Activated B cell treated with CpG ODN at 0.5 μM for 24 hours (primary cell): ENCODE measurements at regions of chr4 and their contacts with region 1.

Region 1: GRCh38 chr4:83639849-83640493 is 104.1 kb downstream of the GPAT3 start:
- DNase-seq: no peak
- ATAC-seq: peak; percentile 62
- H3K4me3 Mint-ChIP-seq: no peak overlapping the region
- H3K27ac Mint-ChIP-seq: no peak overlapping the region
- H3K4me1 Mint-ChIP-seq: peaks cover 2% of the 10 kb centered on the region
- H3K27me3 Mint-ChIP-seq: peaks cover 9% of the 10 kb centered on the region
- CTCF ChIP-seq: no peak

Region 2: DNA sequence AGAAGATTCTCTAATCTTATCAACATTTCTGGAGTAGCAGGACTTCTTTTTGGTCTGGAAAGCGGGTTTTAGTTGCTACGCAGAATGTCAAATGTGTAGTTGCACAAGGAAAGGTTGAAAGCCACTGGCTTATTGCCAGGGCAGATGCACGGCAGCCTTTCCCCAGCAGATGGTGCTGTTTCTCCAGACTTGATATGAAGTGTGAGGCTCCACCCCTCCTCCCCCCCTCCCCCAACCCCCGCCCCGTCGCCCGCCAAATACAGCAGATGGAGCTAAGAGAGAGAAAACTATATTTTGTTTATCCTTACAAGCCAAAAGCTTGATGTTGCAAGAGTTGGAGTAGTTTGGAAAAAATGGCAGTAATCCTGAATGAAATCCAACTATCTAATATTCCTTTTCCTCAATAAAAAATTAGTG is 1177.5 kb before region 1 on chr4:
- CTCF ChIA-PET with region 1: no interaction called
- POLR2A ChIA-PET with region 1: no interaction called
- intact Hi-C with region 1: loop called (anchors 2 kb)
- DNase-seq: peak; percentile 66
- ATAC-seq: peak; percentile 99
- H3K4me3 Mint-ChIP-seq: no peak overlapping the region
- H3K27ac Mint-ChIP-seq: no peak overlapping the region
- H3K4me1 Mint-ChIP-seq: peaks cover 22% of the 10 kb centered on the region
- H3K27me3 Mint-ChIP-seq: no peaks in the 10 kb centered on the region
- CTCF ChIP-seq: no peak

Region 3: DNA sequence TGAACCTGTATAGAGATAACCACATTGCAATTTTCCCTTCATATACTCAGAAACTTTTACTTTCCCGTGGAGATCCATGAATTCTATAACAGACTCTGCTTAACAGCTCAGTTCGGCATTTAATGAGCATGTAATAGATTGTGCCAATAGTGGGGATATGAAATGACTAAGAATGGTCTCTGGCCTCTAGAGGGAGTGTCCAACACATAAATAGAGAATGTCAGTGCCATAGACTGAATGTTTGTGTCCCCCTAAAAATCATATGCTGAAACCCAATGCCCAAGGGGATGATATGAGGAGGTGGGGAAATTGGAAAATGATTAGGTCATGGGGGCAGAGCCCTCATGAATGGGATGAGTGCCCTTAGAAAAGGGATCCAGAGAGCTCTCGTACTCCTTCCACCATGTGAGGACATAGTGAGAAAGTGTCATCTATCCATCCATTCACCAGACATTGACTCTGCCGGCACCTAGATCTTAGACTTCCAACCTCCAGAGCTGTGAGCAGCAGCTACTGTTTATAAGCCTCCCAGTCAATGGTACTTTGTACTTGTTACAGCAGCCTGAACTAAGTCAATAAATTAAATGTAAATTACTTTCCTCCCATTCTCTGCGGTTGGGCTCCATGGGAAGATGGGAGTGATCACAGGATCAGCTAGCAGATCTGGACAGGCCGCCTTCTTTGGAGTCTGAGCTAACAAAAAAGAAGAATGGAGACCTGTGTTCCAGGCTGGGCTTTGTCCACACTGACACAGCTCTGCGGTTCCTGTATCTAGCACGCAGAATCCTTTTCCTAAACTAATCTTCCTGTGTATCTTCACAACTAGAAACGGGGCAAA is 277.3 kb before region 1 on chr4:
- CTCF ChIA-PET with region 1: interaction called, 9 read pairs
- POLR2A ChIA-PET with region 1: no interaction called
- intact Hi-C with region 1: loop called (anchors 1 kb)
- DNase-seq: no peak
- ATAC-seq: peak; percentile 52
- H3K4me3 Mint-ChIP-seq: no peak overlapping the region
- H3K27ac Mint-ChIP-seq: no peak overlapping the region
- H3K4me1 Mint-ChIP-seq: no peaks in the 10 kb centered on the region
- H3K27me3 Mint-ChIP-seq: no peaks in the 10 kb centered on the region
- CTCF ChIP-seq: no peak

Region 4: GRCh38 chr4:83490876-83491450 is 149.0 kb before region 1 on chr4:
- CTCF ChIA-PET with region 1: interaction called, 19 read pairs
- POLR2A ChIA-PET with region 1: interaction called, 3 read pairs
- intact Hi-C with region 1: loop called (anchors 1 kb)
- DNase-seq: no peak
- ATAC-seq: peak; percentile 68
- H3K4me3 Mint-ChIP-seq: no peak overlapping the region
- H3K27ac Mint-ChIP-seq: no peak overlapping the region
- H3K4me1 Mint-ChIP-seq: peaks cover 1% of the 10 kb centered on the region
- H3K27me3 Mint-ChIP-seq: no peaks in the 10 kb centered on the region
- CTCF ChIP-seq: peak; percentile 80

Region 5: GRCh38 chr4:83510442-83510841 is 129.5 kb before region 1 on chr4:
- CTCF ChIA-PET with region 1: interaction called, 70 read pairs
- POLR2A ChIA-PET with region 1: no interaction called
- intact Hi-C with region 1: loop called (anchors 1 kb)
- DNase-seq: no peak
- ATAC-seq: no peak
- H3K4me3 Mint-ChIP-seq: no peak overlapping the region
- H3K27ac Mint-ChIP-seq: no peak overlapping the region
- H3K4me1 Mint-ChIP-seq: no peaks in the 10 kb centered on the region
- H3K27me3 Mint-ChIP-seq: no peaks in the 10 kb centered on the region
- CTCF ChIP-seq: no peak

Region 6: GRCh38 chr4:83658806-83659495 is 19.0 kb after region 1 on chr4:
- CTCF ChIA-PET with region 1: interaction called, 13 read pairs
- POLR2A ChIA-PET with region 1: no interaction called
- intact Hi-C with region 1: no loop called
- DNase-seq: no peak
- ATAC-seq: no peak
- H3K4me3 Mint-ChIP-seq: no peak overlapping the region
- H3K27ac Mint-ChIP-seq: no peak overlapping the region
- H3K4me1 Mint-ChIP-seq: no peaks in the 10 kb centered on the region
- H3K27me3 Mint-ChIP-seq: peaks cover 11% of the 10 kb centered on the region
- CTCF ChIP-seq: no peak

Region 7: GRCh38 chr4:84971319-84971932 is 1331.5 kb after region 1 on chr4:
- CTCF ChIA-PET with region 1: interaction called, 3 read pairs
- POLR2A ChIA-PET with region 1: no interaction called
- intact Hi-C with region 1: loop called (anchors 1 kb)
- DNase-seq: no peak
- ATAC-seq: no peak
- H3K4me3 Mint-ChIP-seq: no peak overlapping the region
- H3K27ac Mint-ChIP-seq: no peak overlapping the region
- H3K4me1 Mint-ChIP-seq: peaks cover 9% of the 10 kb centered on the region
- H3K27me3 Mint-ChIP-seq: peaks cover 21% of the 10 kb centered on the region
- CTCF ChIP-seq: no peak